Heart left ventricle (tissue), 16 donors: ENCODE measurements at regions of chr9 and their contacts with region 1.

Region 1: GRCh38 chr9:34701769-34702736 is 7.9 kb downstream of the CCL21 start:
- DNase-seq: peak; percentile 79 to 91 (median 82)
- ATAC-seq: peak; percentile 87 to 93 (median 90)
- H3K4me3 ChIP-seq: peak overlapping the region; percentile 30 to 92 (median 74)
- H3K27ac ChIP-seq: peak overlapping the region; percentile 17 to 85 (median 77)
- H3K4me1 ChIP-seq: peaks cover 0 to 15% (median 2%) of the 10 kb centered on the region in 12 donors
- H3K27me3 ChIP-seq: no peaks in the 10 kb centered on the region
- CTCF ChIP-seq: peak in 11 of 12 donors; percentile 96 to 100 (median 98)
- POLR2A ChIP-seq: no peak

Region 2: GRCh38 chr9:34611829-34612630 is 90.0 kb before region 1 on chr9 and contains the start of gene RPP25L:
- intact Hi-C with region 1: loop called in 3 of 10 experiments (anchors 1 to 5 kb)
- DNase-seq: peak; percentile 90 to 95 (median 92)
- ATAC-seq: peak; percentile 93 to 97 (median 96)
- H3K4me3 ChIP-seq: peak within 1 kb of the TSS; percentile 64 to 95 (median 82)
- H3K27ac ChIP-seq: peak within 1 kb of the TSS; percentile 81 to 97 (median 93)
- H3K4me1 ChIP-seq: peaks cover 0 to 29% (median 24%) of the 10 kb centered on the region in 12 donors
- H3K27me3 ChIP-seq: no peaks in the 10 kb centered on the region
- CTCF ChIP-seq: no peak
- POLR2A ChIP-seq: peak in 1 of 2 donors; percentile 95
- total RNA-seq, gene RPP25L: 22.5 to 79.2 (median 38.3) TPM

Region 3: DNA sequence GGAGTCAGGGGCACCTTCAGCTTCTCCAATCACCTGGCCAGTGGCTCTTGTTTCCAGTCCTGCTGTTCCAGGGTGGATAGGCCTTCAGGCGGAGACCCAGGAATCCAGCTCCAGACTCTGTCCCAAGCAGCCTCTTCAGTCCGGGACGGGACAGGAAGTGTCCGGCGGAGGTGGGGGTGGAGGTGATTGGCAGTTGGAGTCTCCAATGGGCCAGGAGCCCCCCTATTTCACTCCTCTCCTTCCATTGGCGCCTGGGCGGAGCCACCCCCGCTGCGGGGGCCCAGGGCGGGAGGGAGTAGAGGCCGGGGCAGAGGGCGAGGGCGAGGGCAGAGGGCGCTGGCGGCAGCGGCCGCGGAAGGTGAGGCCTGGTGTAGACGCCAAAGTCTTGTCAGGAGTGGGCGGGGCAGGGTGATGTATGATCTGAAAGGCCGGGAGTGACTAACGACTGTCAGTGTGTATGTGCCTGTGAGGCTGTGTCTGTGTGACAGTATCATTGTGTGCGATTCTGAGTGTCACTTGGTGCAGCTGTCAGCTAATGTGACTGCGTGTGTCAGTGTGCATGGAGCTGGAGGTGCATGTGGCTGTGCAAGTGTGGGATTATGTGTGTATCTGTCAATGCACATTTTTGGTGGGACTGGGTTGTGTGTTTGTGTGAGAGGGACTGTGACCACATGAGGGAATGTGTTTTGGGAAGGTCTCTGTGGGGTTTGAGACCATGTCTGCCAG is 50.0 kb before region 1 on chr9 and contains the start of gene IL11RA:
- intact Hi-C with region 1: loop called in 1 of 10 experiments (anchors 5 kb)
- DNase-seq: peak; percentile 91 to 95 (median 94)
- ATAC-seq: peak; percentile 74 to 86 (median 82)
- H3K4me3 ChIP-seq: peak within 1 kb of the TSS; percentile 35 to 65 (median 54)
- H3K27ac ChIP-seq: peak within 1 kb of the TSS; percentile 74 to 95 (median 86)
- H3K4me1 ChIP-seq: peaks cover 7 to 81% (median 59%) of the 10 kb centered on the region in 12 donors
- H3K27me3 ChIP-seq: no peaks in the 10 kb centered on the region
- CTCF ChIP-seq: peak in 2 of 12 donors; percentile 12 to 18
- POLR2A ChIP-seq: peak in 1 of 2 donors; percentile 73
- total RNA-seq, gene IL11RA: 32.4 to 113 (median 50.1) TPM

Region 4: DNA sequence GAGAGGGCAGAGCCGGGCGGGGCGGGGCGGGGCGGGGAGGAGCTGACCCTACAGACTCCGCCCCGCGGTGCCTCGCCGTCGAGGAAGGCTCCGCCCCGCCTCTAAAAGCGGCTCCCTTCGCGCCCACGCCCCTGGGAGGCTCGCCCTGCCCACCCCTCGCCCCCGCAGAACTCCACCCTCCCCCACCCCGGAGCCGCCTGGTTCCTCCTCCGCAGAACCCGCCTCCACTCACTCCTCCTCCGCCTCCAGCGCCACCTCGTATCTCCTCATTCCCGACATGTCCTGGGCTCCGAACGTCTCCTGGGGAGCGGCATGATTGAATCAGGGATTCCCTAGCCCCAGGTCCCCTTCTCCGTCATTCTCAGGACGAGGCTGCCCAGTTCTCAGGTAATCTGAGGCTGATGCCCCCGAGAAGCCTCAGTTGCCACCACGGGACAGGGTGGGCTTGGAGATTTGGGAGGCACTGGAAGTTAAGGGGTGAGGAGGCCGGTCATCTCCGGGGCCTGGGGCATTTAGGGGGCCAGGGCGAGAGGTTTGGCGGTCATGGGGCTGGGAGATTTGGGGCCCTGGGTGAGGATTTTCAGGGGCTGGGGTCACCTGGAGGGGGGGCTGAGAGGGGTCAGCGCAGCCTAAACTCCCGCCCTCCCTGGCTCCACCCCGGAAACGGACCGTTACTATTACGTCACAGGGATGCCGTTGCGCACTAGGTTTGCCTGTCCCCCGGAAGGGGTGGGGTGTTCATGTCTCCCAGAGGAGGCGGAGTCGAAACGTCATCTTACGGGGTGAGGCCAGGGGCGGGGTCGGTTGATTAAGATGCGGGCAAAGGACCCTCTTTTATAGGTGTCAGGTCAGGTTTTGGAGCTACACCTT is 36.4 kb before region 1 on chr9:
- intact Hi-C with region 1: loop called in 2 of 10 experiments (anchors 2 to 5 kb)
- DNase-seq: peak; percentile 94 to 97 (median 96)
- ATAC-seq: peak; percentile 89 to 93 (median 90)
- H3K4me3 ChIP-seq: peak overlapping the region; percentile 54 to 91 (median 74)
- H3K27ac ChIP-seq: peak overlapping the region; percentile 88 to 99 (median 98)
- H3K4me1 ChIP-seq: peaks cover 0 to 24% (median 12%) of the 10 kb centered on the region in 12 donors
- H3K27me3 ChIP-seq: no peaks in the 10 kb centered on the region
- CTCF ChIP-seq: peak in 2 of 12 donors; percentile 4 to 20
- POLR2A ChIP-seq: peak in 1 of 2 donors; percentile 35

Region 5: GRCh38 chr9:34869390-34869789 is 167.3 kb after region 1 on chr9:
- intact Hi-C with region 1: loop called in 2 of 10 experiments (anchors 10 kb)
- DNase-seq: no peak
- ATAC-seq: no peak
- H3K4me3 ChIP-seq: no peak overlapping the region
- H3K27ac ChIP-seq: no peak overlapping the region
- H3K4me1 ChIP-seq: peaks cover 0 to 10% (median 0%) of the 10 kb centered on the region in 12 donors
- H3K27me3 ChIP-seq: no peaks in the 10 kb centered on the region
- CTCF ChIP-seq: peak in 8 of 12 donors; percentile 15 to 47 (median 26)
- POLR2A ChIP-seq: no peak